K562 (cell line): ENCODE measurements at regions of chr5 and their contacts with region 1.

Region 1: DNA sequence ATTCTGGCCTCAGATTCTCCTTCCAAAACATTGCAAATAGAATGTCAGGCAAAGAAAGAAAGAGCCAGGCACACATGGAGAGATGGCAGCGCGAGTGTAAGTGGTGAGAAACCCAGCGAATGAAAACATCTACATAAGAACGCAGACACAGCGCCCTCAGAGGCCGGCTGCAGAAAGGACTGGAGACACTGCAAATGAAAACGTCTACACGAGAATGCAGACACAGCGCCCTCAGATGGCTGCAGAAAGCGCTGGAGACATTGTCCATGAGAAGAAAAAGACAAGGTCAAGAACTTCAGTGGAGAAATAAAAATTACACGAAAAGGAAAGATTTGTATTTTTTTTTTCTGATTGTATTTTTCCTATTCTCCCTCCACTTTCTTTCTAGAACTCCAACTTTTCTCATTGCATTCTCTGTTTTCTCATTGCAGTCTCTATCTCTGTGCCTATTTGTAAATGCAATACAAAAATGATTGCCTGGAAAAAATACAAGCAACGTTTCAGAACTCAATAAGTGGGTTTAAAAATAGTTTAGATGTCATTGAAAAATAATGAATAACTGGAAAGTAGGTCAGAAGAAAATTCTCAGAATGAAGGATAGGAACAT is 117.9 kb upstream of the LPCAT1 start:
- DNase-seq: peak; percentile 81 to 94 (median 86)
- ATAC-seq: peak; percentile 91
- H3K4me3 ChIP-seq: no peak overlapping the region
- H3K27ac ChIP-seq: no peak overlapping the region
- H3K4me1 ChIP-seq: peaks cover 0 to 41% of the 10 kb centered on the region in 2 experiments; a peak in 2 of 5 replicates
- H3K27me3 ChIP-seq: peaks cover 31 to 71% of the 10 kb centered on the region in 2 experiments
- CTCF ChIP-seq: peak; percentile 99 to 100 (median 100)
- EP300 ChIP-seq: 0 out of 2 replicates have a peak, but pooled peaks have one; percentile 20
- POLR2A ChIP-seq: no peak
- RAD21 ChIP-seq: peak; percentile 88 to 96

Region 2: GRCh38 chr5:923281-923873 is 718.3 kb before region 1 on chr5:
- CTCF ChIA-PET with region 1: no interaction called
- POLR2A ChIA-PET with region 1: no interaction called
- in situ Hi-C with region 1: loop called (anchors 25 kb)
- intact Hi-C with region 1: no loop called
- DNase-seq: peak; percentile 83 to 90 (median 88)
- ATAC-seq: peak; percentile 100
- H3K4me3 ChIP-seq: no peak overlapping the region
- H3K27ac ChIP-seq: no peak overlapping the region
- H3K4me1 ChIP-seq: peaks cover 7 to 20% of the 10 kb centered on the region in 2 experiments; a peak in 3 of 5 replicates
- H3K27me3 ChIP-seq: no peaks in the 10 kb centered on the region
- CTCF ChIP-seq: peak; percentile 95 to 96 (median 96)
- EP300 ChIP-seq: no peak
- POLR2A ChIP-seq: no peak
- RAD21 ChIP-seq: peak; percentile 97 to 99

Region 3: DNA sequence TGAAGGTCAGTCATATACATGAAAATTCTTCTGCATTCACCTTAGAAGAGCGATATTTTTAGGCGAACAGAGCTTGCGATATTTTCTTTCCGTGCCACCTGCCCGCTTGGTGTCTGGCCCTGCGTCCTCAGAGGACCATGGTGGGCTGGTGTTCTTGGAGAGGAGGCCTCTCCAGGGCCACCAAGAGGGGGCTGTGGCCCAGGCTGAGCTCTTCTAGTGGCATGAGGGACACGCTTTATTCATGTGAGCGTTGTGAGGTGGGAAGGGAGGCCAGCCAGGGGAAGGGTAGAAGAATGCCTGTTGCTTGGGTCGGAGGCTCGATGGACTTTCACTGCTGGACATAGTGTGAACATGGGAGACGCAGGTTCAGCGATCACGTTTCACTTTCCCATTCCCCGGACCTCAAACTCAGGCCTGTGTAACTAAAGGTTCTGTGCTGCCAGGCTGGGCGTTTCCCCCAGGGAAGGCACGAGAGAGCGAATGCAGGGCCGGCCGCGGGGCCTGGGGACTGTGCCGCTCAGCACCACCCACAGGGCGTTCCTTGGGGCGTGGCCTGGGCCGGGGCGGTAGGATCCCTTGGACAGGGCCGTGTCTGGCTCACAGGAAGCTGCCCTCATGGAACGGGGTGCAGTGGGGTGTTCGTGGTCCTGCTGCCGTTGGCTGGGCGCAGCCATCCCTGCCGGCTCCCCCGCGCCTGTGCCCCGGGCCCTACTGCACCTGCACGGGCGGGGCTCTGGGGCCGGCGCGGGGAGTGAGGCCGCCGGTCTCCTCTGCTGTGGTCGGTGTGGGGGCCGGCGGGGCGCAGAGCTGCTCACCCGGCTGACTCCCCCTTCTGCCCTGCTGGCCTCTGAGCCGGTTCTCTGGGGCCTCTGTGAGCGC is 256.0 kb before region 1 on chr5:
- CTCF ChIA-PET with region 1: no interaction called
- POLR2A ChIA-PET with region 1: no interaction called
- in situ Hi-C with region 1: no loop called
- intact Hi-C with region 1: loop called (anchors 10 kb)
- DNase-seq: peak; percentile 80 to 92 (median 90)
- ATAC-seq: peak; percentile 99
- H3K4me3 ChIP-seq: peak overlapping the region; percentile 40
- H3K27ac ChIP-seq: no peak overlapping the region
- H3K4me1 ChIP-seq: peaks cover 4 to 20% of the 10 kb centered on the region in 2 experiments; a peak in 3 of 5 replicates
- H3K27me3 ChIP-seq: peaks cover 41 to 89% of the 10 kb centered on the region in 2 experiments
- CTCF ChIP-seq: no peak
- EP300 ChIP-seq: no peak
- POLR2A ChIP-seq: no peak
- RAD21 ChIP-seq: no peak

Region 4: DNA sequence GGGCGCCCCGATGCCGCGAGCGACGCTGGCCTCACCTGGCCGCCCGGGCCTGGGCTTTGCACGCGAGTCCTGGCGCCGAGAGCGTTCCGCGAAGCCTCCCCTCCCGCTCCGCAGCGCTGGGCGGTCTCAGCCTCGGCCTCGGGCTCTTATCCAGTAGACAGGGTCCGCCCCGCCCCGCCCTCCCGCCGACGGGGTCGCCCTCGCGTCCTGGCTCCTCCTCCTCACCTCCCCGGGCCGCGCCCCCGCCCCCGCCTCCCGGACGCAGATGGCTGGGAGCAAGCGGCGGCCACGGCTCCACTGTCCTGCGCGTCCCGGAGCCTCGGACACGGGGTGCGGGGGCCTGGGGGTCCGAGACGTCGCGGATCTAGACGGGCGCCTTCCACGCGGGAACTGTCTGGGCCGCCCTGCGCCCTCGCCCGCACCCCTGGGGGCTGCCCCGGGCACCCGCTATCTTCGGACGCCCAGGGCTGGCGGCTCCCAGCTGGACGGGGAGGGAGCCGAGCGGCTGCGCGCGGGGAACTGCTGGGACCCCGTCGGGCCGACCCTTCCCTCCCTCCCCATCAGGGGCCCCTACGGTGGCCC is 196.3 kb before region 1 on chr5 and contains the start of gene SLC6A3:
- CTCF ChIA-PET with region 1: no interaction called
- POLR2A ChIA-PET with region 1: no interaction called
- in situ Hi-C with region 1: no loop called
- intact Hi-C with region 1: no loop called
- DNase-seq: peak; percentile 69 to 84 (median 78)
- ATAC-seq: peak; percentile 88
- H3K4me3 ChIP-seq: no peak within 1 kb of the TSS
- H3K27ac ChIP-seq: no peak within 1 kb of the TSS
- H3K4me1 ChIP-seq: peaks cover 0 to 18% of the 10 kb centered on the region in 2 experiments; a peak in 2 of 5 replicates
- H3K27me3 ChIP-seq: peaks cover 45 to 76% of the 10 kb centered on the region in 2 experiments; a peak in 4 of 5 replicates
- CTCF ChIP-seq: no peak
- EP300 ChIP-seq: no peak
- POLR2A ChIP-seq: no peak
- RAD21 ChIP-seq: no peak
- polyA plus RNA-seq, gene SLC6A3: not detected

Region 5: GRCh38 chr5:1479581-1480188 is 162.0 kb before region 1 on chr5:
- CTCF ChIA-PET with region 1: interaction called, 17 read pairs
- POLR2A ChIA-PET with region 1: no interaction called
- in situ Hi-C with region 1: no loop called
- intact Hi-C with region 1: loop called (anchors 1 kb)
- DNase-seq: peak; percentile 62 to 83 (median 81)
- ATAC-seq: peak; percentile 80
- H3K4me3 ChIP-seq: no peak overlapping the region
- H3K27ac ChIP-seq: no peak overlapping the region
- H3K4me1 ChIP-seq: peaks cover 0 to 24% of the 10 kb centered on the region in 2 experiments; a peak in 1 of 5 replicates
- H3K27me3 ChIP-seq: no peaks in the 10 kb centered on the region
- CTCF ChIP-seq: peak; percentile 86 to 95 (median 87)
- EP300 ChIP-seq: no peak
- POLR2A ChIP-seq: no peak
- RAD21 ChIP-seq: peak; percentile 59 to 84; a peak in 3 of 4 replicates

Region 6: DNA sequence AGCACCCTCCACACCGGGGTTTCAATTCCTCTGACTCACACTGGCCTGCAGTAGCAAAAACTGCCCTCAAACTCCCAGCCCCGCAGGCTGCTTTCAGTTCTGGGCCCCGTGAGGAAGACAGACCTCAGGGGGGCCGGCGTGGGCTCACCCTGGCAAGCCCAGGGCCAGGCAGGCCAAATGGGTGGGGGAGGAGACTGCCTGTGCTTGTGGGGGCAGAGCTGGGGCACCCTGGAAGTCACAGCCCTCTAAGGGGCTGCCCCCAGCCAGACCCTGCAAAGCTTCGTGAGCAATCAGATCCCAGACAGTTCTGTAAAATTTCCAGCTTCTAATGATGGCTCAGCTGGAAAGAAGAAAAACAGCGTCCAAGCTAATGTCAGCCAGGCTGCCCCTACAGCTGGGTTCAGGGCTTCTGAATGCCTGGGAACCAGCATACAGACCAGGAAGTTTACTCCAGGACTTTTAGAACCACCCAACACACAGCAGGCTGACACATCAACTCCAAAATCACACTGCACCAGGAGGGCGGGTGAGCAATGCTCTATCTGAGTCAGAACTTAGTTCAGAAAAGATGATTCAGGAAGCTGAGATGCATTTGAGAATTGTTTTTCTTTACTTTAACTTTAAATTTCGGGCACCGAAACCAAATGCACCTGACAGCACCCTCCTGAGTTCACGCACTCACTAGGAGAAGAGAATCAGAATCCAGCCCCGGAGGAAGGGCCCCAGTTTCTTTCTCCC is 152.6 kb before region 1 on chr5:
- CTCF ChIA-PET with region 1: no interaction called
- POLR2A ChIA-PET with region 1: no interaction called
- in situ Hi-C with region 1: loop called (anchors 5 kb)
- intact Hi-C with region 1: no loop called
- DNase-seq: no peak
- ATAC-seq: no peak
- H3K4me3 ChIP-seq: no peak overlapping the region
- H3K27ac ChIP-seq: no peak overlapping the region
- H3K4me1 ChIP-seq: peaks cover 0 to 15% of the 10 kb centered on the region in 2 experiments; a peak in 1 of 5 replicates
- H3K27me3 ChIP-seq: no peaks in the 10 kb centered on the region
- CTCF ChIP-seq: no peak
- EP300 ChIP-seq: no peak
- POLR2A ChIP-seq: no peak
- RAD21 ChIP-seq: no peak